Caco-2 (cell line): ENCODE measurements at regions of chr13 and their contacts with region 1.

Region 1: GRCh38 chr13:75876360-75877050 is 240.4 kb downstream of the LMO7 start:
- DNase-seq: peak; percentile 75 to 77
- H3K4me3 ChIP-seq: no peak overlapping the region
- H3K4me3 Mint-ChIP-seq: peak overlapping the region; percentile 23
- H3K27ac Mint-ChIP-seq: peak overlapping the region; percentile 33
- H3K4me1 ChIP-seq: peaks cover 10% of the 10 kb centered on the region
- H3K4me1 Mint-ChIP-seq: peaks cover 21% of the 10 kb centered on the region
- H3K27me3 ChIP-seq: no peaks in the 10 kb centered on the region
- H3K27me3 Mint-ChIP-seq: no peaks in the 10 kb centered on the region
- CTCF ChIP-seq: peak; percentile 89 to 95

Region 2: GRCh38 chr13:76009491-76009890 is 133.0 kb after region 1 on chr13:
- CTCF ChIA-PET with region 1: interaction called, 4 read pairs
- POLR2A ChIA-PET with region 1: no interaction called
- intact Hi-C with region 1: loop called (anchors 1 kb)
- DNase-seq: peak in 1 of 2 experiments; percentile 48
- H3K4me3 ChIP-seq: no peak overlapping the region
- H3K4me3 Mint-ChIP-seq: peak overlapping the region; percentile 61
- H3K27ac Mint-ChIP-seq: peak overlapping the region; percentile 95
- H3K4me1 ChIP-seq: peaks cover 95% of the 10 kb centered on the region
- H3K4me1 Mint-ChIP-seq: peaks cover 53% of the 10 kb centered on the region
- H3K27me3 ChIP-seq: no peaks in the 10 kb centered on the region
- H3K27me3 Mint-ChIP-seq: no peaks in the 10 kb centered on the region
- CTCF ChIP-seq: no peak

Region 3: GRCh38 chr13:76023652-76024051 is 147.1 kb after region 1 on chr13:
- CTCF ChIA-PET with region 1: interaction called, 6 read pairs
- POLR2A ChIA-PET with region 1: no interaction called
- intact Hi-C with region 1: loop called (anchors 2 kb)
- DNase-seq: peak in 1 of 2 experiments; percentile 24
- H3K4me3 ChIP-seq: no peak overlapping the region
- H3K4me3 Mint-ChIP-seq: peak overlapping the region; percentile 33
- H3K27ac Mint-ChIP-seq: peak overlapping the region; percentile 91
- H3K4me1 ChIP-seq: peaks cover 48% of the 10 kb centered on the region
- H3K4me1 Mint-ChIP-seq: peaks cover 47% of the 10 kb centered on the region
- H3K27me3 ChIP-seq: no peaks in the 10 kb centered on the region
- H3K27me3 Mint-ChIP-seq: no peaks in the 10 kb centered on the region
- CTCF ChIP-seq: no peak

Region 4: GRCh38 chr13:76223565-76223964 is 347.1 kb after region 1 on chr13:
- CTCF ChIA-PET with region 1: no interaction called
- POLR2A ChIA-PET with region 1: no interaction called
- intact Hi-C with region 1: loop called (anchors 1 kb)
- DNase-seq: peak in 1 of 2 experiments; percentile 45
- H3K4me3 ChIP-seq: no peak overlapping the region
- H3K4me3 Mint-ChIP-seq: no peak overlapping the region
- H3K27ac Mint-ChIP-seq: no peak overlapping the region
- H3K4me1 ChIP-seq: no peaks in the 10 kb centered on the region
- H3K4me1 Mint-ChIP-seq: no peaks in the 10 kb centered on the region
- H3K27me3 ChIP-seq: no peaks in the 10 kb centered on the region
- H3K27me3 Mint-ChIP-seq: no peaks in the 10 kb centered on the region
- CTCF ChIP-seq: peak; percentile 25 to 47

Region 5: DNA sequence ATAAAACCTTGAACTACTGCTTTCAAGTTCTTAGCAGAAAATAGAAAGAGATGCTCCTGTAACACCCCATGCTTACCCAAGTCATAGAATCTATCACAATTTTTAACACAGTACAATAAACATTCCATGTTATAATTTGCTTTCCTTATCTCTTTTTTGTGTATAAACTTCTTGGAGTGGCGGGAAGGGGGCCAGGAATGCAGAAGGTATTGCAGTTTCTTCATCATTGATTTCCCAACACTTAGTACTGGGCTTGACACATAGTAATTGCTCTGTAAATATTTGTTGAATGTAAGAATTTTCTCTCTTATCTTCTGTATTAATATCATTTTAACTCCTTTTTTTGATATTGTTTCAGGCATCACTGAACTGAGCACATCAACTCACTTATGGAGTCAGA is 473.9 kb after region 1 on chr13:
- CTCF ChIA-PET with region 1: no interaction called
- POLR2A ChIA-PET with region 1: no interaction called
- intact Hi-C with region 1: loop called (anchors 10 kb)
- DNase-seq: peak; percentile 75 to 80
- H3K4me3 ChIP-seq: no peak overlapping the region
- H3K4me3 Mint-ChIP-seq: no peak overlapping the region
- H3K27ac Mint-ChIP-seq: peak overlapping the region; percentile 36
- H3K4me1 ChIP-seq: peaks cover 29% of the 10 kb centered on the region
- H3K4me1 Mint-ChIP-seq: peaks cover 25% of the 10 kb centered on the region
- H3K27me3 ChIP-seq: no peaks in the 10 kb centered on the region
- H3K27me3 Mint-ChIP-seq: no peaks in the 10 kb centered on the region
- CTCF ChIP-seq: no peak

Region 6: GRCh38 chr13:76886292-76887075 is 1010.0 kb after region 1 on chr13 and contains the start of gene KCTD12:
- CTCF ChIA-PET with region 1: no interaction called
- POLR2A ChIA-PET with region 1: no interaction called
- intact Hi-C with region 1: loop called (anchors 5 kb)
- DNase-seq: peak; percentile 63 to 82
- H3K4me3 ChIP-seq: peak within 1 kb of the TSS; percentile 56
- H3K4me3 Mint-ChIP-seq: peak within 1 kb of the TSS; percentile 79
- H3K27ac Mint-ChIP-seq: peak within 1 kb of the TSS; percentile 35
- H3K4me1 ChIP-seq: 0 out of 2 replicates have a peak, but pooled peaks cover 15% of the 10 kb centered on the region
- H3K4me1 Mint-ChIP-seq: peaks cover 14% of the 10 kb centered on the region
- H3K27me3 ChIP-seq: no peaks in the 10 kb centered on the region; the same call in 1 of the 2 replicates
- H3K27me3 Mint-ChIP-seq: peaks cover 30% of the 10 kb centered on the region
- CTCF ChIP-seq: peak in 1 of 2 experiments; percentile 30
- total RNA-seq, gene KCTD12: 1.8 and 3.2 TPM in 2 replicates

Region 7: GRCh38 chr13:76980075-76980718 is 1103.7 kb after region 1 on chr13:
- CTCF ChIA-PET with region 1: no interaction called
- POLR2A ChIA-PET with region 1: no interaction called
- intact Hi-C with region 1: loop called (anchors 10 kb)
- DNase-seq: peak; percentile 79 to 92
- H3K4me3 ChIP-seq: peak overlapping the region; percentile 32
- H3K4me3 Mint-ChIP-seq: no peak overlapping the region
- H3K27ac Mint-ChIP-seq: no peak overlapping the region
- H3K4me1 ChIP-seq: no peaks in the 10 kb centered on the region; the same call in 1 of the 2 replicates
- H3K4me1 Mint-ChIP-seq: no peaks in the 10 kb centered on the region
- H3K27me3 ChIP-seq: no peaks in the 10 kb centered on the region
- H3K27me3 Mint-ChIP-seq: peaks cover 26% of the 10 kb centered on the region
- CTCF ChIP-seq: peak; percentile 95 to 99